ENCODE measurements at regions of chr10 and their contacts with region 1.

Region 1: GRCh38 chr10:51960494-51960895 is 261.1 kb upstream of the CSTF2T start:
- DNase-seq: no peak
- ATAC-seq: peak; percentile 30 to 85 (median 52)
- H3K4me3 ChIP-seq: no peak overlapping the region
- H3K27ac ChIP-seq: no peak overlapping the region
- H3K4me1 ChIP-seq: peaks cover 0 to 13% (median 1%) of the 10 kb centered on the region in 12 donors
- H3K27me3 ChIP-seq: no peaks in the 10 kb centered on the region
- CTCF ChIP-seq: peak; percentile 26 to 63 (median 56)
- POLR2A ChIP-seq: no peak

Region 2: GRCh38 chr10:51001587-51001986 is 958.9 kb before region 1 on chr10:
- intact Hi-C with region 1: loop called in 5 of 10 experiments (anchors 5 to 10 kb)
- DNase-seq: no peak
- ATAC-seq: peak in 3 of 4 donors; percentile 55 to 70 (median 67)
- H3K4me3 ChIP-seq: no peak overlapping the region
- H3K27ac ChIP-seq: peak overlapping the region in 5 of 12 donors; percentile 17 to 53 (median 26)
- H3K4me1 ChIP-seq: peaks cover 0 to 63% (median 6%) of the 10 kb centered on the region in 12 donors
- H3K27me3 ChIP-seq: no peaks in the 10 kb centered on the region
- CTCF ChIP-seq: peak; percentile 38 to 75 (median 59)
- POLR2A ChIP-seq: no peak

Region 3: GRCh38 chr10:51063659-51064535 is 896.6 kb before region 1 on chr10:
- intact Hi-C with region 1: loop called in 6 of 10 experiments (anchors 5 to 10 kb)
- DNase-seq: no peak
- ATAC-seq: peak in 2 of 4 donors; percentile 51 to 53
- H3K4me3 ChIP-seq: no peak overlapping the region
- H3K27ac ChIP-seq: no peak overlapping the region
- H3K4me1 ChIP-seq: peaks cover 0 to 16% (median 2%) of the 10 kb centered on the region in 12 donors
- H3K27me3 ChIP-seq: no peaks in the 10 kb centered on the region
- CTCF ChIP-seq: peak; percentile 27 to 75 (median 60)
- POLR2A ChIP-seq: no peak

Region 4: DNA sequence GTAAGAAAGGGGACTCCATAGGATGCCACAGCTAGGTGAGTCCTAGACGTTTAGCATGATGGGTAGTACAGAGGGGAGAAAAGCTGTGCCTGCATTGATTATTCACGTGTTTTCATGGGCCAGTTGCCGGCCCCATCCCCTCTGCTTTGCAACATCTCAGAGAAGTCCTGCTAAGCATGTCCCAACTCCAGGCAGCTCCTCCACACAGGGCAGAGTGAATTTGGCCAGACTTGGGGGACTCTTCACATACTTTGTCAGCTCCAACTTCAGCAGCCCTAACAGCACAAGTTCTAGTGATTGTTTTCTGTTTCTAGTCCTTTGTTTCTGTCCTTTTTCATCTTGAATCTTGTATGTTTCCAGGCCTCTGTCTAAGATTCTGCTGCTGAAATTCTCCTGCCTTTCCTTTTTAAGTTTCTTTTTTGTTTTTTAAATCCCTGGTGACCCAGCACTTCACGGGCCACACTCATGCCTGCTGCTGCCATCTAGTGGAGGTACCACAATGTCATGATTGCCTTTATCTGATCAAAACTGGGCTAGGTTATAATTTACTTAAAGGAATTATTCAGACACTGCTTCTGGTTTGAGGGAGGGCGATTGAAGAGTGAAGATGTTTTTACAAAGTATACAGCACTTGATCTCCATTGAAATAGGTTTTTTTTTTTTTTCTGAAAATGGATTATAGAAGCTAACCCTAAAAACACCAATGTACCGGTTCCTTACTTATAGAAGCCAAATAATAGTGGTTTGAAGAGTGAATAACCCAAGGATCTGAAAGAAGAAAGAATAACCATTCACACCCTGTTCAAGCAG is 538.0 kb before region 1 on chr10:
- intact Hi-C with region 1: loop called in 1 of 10 experiments (anchors 10 kb)
- DNase-seq: peak; percentile 52 to 61 (median 57)
- ATAC-seq: peak; percentile 47 to 72 (median 60)
- H3K4me3 ChIP-seq: no peak overlapping the region
- H3K27ac ChIP-seq: peak overlapping the region; percentile 52 to 80 (median 72)
- H3K4me1 ChIP-seq: peaks cover 0 to 48% (median 10%) of the 10 kb centered on the region in 12 donors
- H3K27me3 ChIP-seq: no peaks in the 10 kb centered on the region
- CTCF ChIP-seq: peak; percentile 39 to 84 (median 70)
- POLR2A ChIP-seq: no peak

Measured in heart left ventricle (tissue), 16 donors.